Activated CD8-positive, alpha-beta memory T cell treated with anti-CD3 and anti-CD28 coated beads, Interleukin-2, amount 10 ng/mL, durations not matched to agents 7 days and 5 days (primary cell): ENCODE measurements at regions of chr3 and their contacts with region 1.

Region 1: DNA sequence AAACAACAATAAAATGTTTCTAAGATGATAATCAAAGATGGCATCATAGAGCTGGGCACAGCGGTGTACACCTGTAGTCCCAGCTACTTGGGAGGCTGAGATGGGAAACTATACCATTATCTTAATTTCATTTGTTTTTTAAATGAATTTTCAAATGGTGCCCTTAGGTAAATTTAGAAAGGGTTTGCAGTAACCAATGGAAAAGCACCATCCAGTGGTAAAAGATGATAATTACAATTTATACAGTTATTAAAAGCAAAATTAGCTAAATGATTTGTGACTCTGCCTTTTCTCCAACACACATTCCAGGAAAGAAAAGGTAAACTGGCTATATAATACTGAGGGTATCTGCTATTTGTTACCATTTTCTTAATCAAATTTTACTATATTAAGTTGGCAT is 14.4 kb upstream of the ANKRD28 start:
- DNase-seq: no peak
- ATAC-seq: no peak
- H3K4me3 Mint-ChIP-seq: no peak overlapping the region
- H3K27ac Mint-ChIP-seq: peak overlapping the region; percentile 68
- H3K4me1 Mint-ChIP-seq: peaks cover 57% of the 10 kb centered on the region
- H3K27me3 Mint-ChIP-seq: no peaks in the 10 kb centered on the region

Region 2: DNA sequence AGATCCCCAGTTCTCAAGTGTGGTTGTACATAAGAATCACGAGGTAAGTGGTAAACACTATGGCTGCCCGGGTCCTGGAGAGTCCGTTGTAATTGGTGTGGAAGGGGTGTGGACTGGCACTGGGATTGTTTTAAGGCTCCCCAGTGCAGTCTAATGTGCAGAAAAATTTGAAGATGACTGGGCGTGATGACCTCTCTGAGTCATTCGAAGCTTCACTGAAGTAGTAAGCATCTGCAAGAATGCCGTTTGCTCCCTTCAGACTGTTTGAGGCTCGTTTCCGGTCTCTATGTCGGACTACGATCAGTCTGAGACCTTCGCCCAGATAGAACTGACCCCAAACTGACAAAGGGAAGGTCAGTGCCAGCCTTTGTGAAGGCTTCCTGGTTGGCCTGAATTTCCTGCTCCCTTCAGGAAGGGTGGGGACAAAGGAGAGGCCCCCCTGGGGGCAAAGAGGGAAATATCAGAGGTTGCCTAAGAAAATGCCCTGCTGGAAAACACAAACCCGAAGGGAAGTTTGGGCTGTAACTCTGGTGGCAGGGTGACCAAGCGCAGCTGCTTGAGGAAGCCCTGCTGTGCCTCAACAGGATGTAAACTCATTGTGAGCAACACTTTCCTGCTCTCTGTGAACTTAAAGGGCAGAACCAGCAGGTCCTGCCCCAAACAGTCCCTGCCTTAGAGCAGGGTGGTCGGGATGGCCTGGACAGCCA is 176.0 kb before region 1 on chr3:
- CTCF ChIA-PET with region 1: interaction called, 83 read pairs
- DNase-seq: peak; percentile 77
- ATAC-seq: peak; percentile 87
- H3K4me3 Mint-ChIP-seq: peak overlapping the region; percentile 49
- H3K27ac Mint-ChIP-seq: peak overlapping the region; percentile 93
- H3K4me1 Mint-ChIP-seq: peaks cover 46% of the 10 kb centered on the region
- H3K27me3 Mint-ChIP-seq: no peaks in the 10 kb centered on the region

Region 3: GRCh38 chr3:15797642-15798303 is 14.4 kb before region 1 on chr3 and contains the start of gene ANKRD28:
- CTCF ChIA-PET with region 1: interaction called, 19 read pairs
- DNase-seq: peak; percentile 51
- ATAC-seq: peak; percentile 49
- H3K4me3 Mint-ChIP-seq: peak within 1 kb of the TSS; percentile 88
- H3K27ac Mint-ChIP-seq: peak within 1 kb of the TSS; percentile 98
- H3K4me1 Mint-ChIP-seq: peaks cover 70% of the 10 kb centered on the region
- H3K27me3 Mint-ChIP-seq: no peaks in the 10 kb centered on the region
- total RNA-seq, gene ANKRD28: 56.3 to 73.6 TPM